IMR-90 (cell line): ENCODE measurements at regions of chr1 and their contacts with region 1.

Region 1: DNA sequence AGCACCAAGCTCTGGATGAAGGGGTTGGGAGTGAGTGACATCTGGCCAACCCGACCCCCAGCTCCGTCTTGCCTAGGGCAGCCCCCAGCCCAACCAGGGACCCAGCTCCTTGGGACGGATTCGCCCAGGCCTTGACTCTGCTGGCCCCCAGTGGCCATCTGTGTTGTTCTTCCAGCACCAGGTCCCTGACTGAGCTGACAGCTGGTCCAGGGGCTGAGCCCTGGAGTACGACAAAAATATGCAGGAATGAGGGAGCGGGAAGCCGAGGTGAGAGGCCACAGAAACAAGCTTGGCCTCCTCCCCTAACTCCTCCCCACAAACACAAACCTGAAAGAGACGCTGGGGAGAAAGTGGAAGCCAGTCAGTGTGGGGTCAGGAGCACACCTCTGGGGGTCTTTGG is 55.0 kb upstream of the PAX7 start:
- DNase-seq: peak; percentile 8
- ATAC-seq: peak; percentile 81
- H3K4me3 ChIP-seq: no peak overlapping the region
- H3K27ac ChIP-seq: no peak overlapping the region
- H3K4me1 ChIP-seq: no peaks in the 10 kb centered on the region
- H3K27me3 ChIP-seq: no peaks in the 10 kb centered on the region; the same call in 1 of the 2 replicates
- CTCF ChIP-seq: peak; percentile 50
- POLR2A ChIP-seq: no peak
- RAD21 ChIP-seq: peak; percentile 53

Region 2: DNA sequence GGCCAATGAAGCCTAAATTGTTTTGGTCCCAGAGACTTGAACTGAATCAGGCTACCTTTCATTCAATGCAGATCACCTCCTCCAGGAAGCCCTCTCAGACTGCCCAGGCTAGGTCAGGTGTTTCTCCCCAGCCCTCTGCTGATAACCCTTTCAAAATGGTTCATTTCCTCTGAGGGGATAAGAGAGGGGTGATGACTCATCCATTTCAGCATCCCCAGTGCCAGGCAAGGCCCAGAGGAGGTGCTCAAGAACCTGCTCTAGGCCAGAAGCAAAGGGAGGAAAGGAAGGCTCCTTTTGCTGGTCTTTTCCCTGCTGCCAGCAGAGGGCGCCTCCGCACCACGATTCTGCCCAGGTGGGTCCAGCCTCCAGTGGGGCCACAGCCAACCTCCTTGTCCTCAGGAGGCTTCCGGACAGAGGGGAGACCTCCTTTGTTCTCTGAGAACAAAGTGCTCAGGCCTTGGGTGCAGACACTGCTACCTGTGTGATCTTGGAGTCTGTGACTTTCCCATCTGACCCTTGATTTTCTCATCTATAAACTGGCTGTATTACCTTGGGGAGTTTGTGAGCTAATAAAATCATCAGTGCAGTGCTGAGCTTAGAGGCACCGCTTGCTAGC is 1081.4 kb before region 1 on chr1:
- CTCF ChIA-PET with region 1: no interaction called
- POLR2A ChIA-PET with region 1: no interaction called
- dilution Hi-C with region 1: no loop called
- in situ Hi-C with region 1: no loop called
- intact Hi-C with region 1: loop called (anchors 2 kb)
- DNase-seq: peak; percentile 69
- ATAC-seq: peak; percentile 97
- H3K4me3 ChIP-seq: no peak overlapping the region
- H3K27ac ChIP-seq: no peak overlapping the region
- H3K4me1 ChIP-seq: peaks cover under 1% of the 10 kb centered on the region; the same call in 1 of the 2 replicates
- H3K27me3 ChIP-seq: peaks cover 5% of the 10 kb centered on the region; the same call in 1 of the 2 replicates
- CTCF ChIP-seq: peak; percentile 91
- POLR2A ChIP-seq: no peak
- RAD21 ChIP-seq: peak; percentile 93